ENCODE measurements at regions of chr12 and their contacts with region 1.

Region 1: DNA sequence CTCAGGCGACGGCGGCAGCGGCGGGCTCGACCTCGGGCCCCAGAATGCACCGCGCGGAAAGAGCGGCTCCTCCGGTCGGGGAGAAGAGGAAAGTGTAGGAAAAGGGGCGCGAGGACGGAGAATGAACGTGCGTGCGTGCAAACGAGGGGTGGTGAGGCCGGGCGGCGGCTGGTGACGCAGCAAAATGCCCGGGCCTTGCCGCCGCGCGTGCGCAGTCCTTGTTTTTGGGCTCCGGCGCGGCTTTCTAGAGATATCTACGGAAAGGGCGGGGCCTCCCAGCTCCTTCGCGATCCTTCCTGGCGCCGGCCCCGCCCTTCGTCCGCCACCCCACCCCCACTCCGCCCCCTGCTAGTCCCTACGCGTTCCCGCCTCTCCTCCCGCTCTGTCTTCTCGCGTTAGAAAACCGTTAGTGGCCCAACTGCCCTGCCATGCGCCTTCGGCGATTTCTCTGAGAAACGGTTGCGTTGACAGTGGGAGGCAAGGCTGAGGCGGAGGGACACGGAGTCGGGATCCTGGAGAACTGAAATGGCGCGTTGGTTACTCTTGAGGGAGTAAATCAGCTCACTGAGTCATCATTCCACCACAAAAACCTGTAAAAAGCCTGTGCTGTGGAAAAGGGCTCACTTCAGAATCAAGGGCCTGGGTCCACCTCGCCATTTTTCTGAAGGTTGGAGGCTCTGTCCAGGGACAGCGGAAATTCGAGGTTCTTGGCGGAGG is at the start of gene PTGES3:
- DNase-seq: peak; percentile 96
- H3K4me3 ChIP-seq: peak within 1 kb of the TSS; percentile 87 to 95
- H3K27ac ChIP-seq: peak within 1 kb of the TSS; percentile 100
- H3K4me1 ChIP-seq: no peaks in the 10 kb centered on the region
- H3K27me3 ChIP-seq: no peaks in the 10 kb centered on the region
- CTCF ChIP-seq: peak in 1 of 4 experiments; percentile 36
- POLR2A ChIP-seq: peak; percentile 93
- total RNA-seq, gene PTGES3: 94.6 to 125 TPM

Region 2: GRCh38 chr12:56461235-56462159 is 226.8 kb before region 1 on chr12:
- intact Hi-C with region 1: no loop called
- DNase-seq: no peak
- H3K4me3 ChIP-seq: no peak overlapping the region
- H3K27ac ChIP-seq: no peak overlapping the region
- H3K4me1 ChIP-seq: no peaks in the 10 kb centered on the region
- H3K27me3 ChIP-seq: no peaks in the 10 kb centered on the region
- CTCF ChIP-seq: no peak
- POLR2A ChIP-seq: no peak

Region 3: DNA sequence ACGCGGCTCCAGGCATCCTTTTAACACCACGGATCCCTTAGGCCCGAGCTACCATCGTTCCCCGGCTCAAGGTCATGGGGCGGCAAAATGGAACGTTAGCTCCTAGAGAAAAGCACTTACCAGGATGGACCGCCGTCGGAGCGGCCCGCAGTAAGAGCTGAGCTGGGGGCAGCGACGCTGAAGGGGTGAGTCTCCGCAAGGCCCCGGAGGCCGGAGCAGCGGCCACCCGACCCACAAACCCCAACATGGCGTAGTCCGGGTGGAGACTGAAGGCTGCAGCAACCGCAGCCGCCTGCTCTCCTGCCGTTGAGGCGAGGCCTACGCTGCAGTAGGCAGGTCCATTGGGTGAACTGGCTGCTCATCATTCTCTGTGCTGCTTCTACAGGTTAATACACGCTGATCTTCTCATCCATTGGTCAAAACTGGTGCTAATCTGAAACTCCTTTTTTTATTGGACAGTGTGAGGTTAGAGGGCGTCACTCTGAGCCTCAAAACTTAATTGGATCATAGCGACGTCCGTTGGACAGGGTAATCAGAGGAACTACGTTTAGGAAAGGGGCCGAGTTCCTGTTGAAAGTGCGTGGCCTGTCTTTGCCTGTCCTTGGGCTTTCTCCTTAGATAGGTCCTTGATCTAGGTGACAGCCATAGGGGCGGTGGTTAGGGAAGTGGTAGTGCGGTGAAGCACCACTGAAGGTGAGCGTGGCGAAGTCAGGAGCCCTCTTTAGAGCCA is 42.4 kb before region 1 on chr12 and contains the start of gene ATP5F1B:
- intact Hi-C with region 1: loop called (anchors 5 kb)
- DNase-seq: peak; percentile 98
- H3K4me3 ChIP-seq: peak within 1 kb of the TSS; percentile 88 to 96
- H3K27ac ChIP-seq: peak within 1 kb of the TSS; percentile 87 to 94
- H3K4me1 ChIP-seq: no peaks in the 10 kb centered on the region
- H3K27me3 ChIP-seq: no peaks in the 10 kb centered on the region
- CTCF ChIP-seq: peak in 2 of 4 experiments; percentile 4 to 17
- POLR2A ChIP-seq: peak; percentile 99
- total RNA-seq, gene ATP5F1B: 372 to 401 TPM

Region 4: DNA sequence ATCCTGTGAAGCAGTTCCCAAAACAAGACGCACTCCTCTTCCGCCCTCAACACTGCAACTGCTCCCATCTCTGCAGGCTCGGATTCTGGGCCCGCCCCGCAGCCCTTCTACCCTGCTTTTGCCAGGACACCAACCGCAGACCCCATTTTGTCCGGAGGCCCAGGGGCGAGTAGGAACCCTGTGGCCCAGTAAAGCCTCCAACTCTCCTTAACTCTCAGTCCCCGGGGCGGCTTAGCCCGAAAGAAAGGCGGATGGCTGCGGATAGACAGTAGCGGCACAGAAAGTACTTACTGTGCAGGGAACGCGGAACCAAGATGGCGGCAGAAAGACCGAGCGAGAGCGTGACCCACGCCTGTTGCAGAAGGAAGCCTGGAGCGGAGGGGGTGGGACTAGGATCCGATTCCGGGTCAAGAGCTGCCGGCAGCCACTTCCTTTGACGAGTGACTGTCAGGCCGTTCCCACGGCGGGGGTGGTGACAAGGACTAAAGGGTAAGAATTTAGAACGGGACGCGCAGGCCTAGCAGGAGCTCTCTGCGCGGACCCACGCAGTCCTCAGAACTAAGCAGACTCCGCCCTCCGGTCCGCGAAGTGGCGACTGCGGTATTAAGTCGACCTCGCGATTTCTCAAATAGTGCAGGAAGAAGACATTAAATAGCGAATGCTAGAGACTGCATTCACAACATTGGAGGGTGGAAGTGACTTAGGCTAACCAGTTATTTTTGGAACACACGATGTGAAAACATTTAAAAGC is 36.9 kb after region 1 on chr12 and contains the start of gene NACA:
- intact Hi-C with region 1: loop called (anchors 1 kb)
- DNase-seq: peak; percentile 99
- H3K4me3 ChIP-seq: peak within 1 kb of the TSS; percentile 69 to 75
- H3K27ac ChIP-seq: peak within 1 kb of the TSS; percentile 94 to 96
- H3K4me1 ChIP-seq: peaks cover 19% of the 10 kb centered on the region
- H3K27me3 ChIP-seq: no peaks in the 10 kb centered on the region
- CTCF ChIP-seq: no peak
- POLR2A ChIP-seq: peak; percentile 97
- total RNA-seq, gene NACA: 912 to 1,347 TPM